Mammary epithelial cell (primary cell): ENCODE measurements at regions of chr14 and their contacts with region 1.

Region 1: DNA sequence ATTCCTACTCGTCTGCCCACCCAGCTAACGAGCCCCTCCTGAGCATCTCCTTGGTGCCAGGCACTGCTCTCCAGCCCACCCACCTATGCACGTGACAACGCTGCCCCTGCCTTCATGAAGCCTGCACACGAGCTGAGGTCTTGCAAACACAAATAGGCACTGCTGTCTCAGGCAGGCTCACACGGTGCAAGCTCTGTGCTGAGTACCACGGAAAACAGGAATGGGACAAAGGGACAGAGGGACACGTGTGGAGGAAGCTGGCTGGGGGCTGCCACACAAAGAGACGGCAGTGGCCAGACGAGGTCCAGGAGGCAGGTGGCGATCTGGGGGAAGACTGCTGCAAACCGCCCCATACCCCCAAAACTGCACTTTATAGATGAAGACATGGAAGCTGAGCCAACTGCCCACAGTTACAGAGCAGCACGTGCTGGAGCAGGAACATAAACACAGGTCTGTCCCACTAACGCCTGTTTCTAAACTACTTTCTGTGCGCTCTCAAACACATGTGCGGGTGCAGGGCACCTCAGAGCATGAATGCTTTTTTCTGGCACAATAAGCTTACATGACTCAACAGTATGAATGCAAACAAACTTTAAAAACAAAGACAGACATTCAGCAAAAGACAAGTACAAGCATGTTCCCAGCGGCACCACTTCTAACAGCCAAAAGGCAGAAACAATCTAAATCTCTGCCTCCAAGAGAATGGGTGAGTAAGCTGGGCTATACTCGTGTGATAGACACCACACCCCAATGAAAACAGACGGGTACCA is 64.5 kb downstream of the AMN start:
- DNase-seq: peak; percentile 99
- H3K4me3 ChIP-seq: no peak overlapping the region
- H3K27ac ChIP-seq: peak overlapping the region; percentile 67
- H3K4me1 ChIP-seq: peaks cover 20% of the 10 kb centered on the region
- H3K27me3 ChIP-seq: no peaks in the 10 kb centered on the region
- CTCF ChIP-seq: no peak

Region 2: DNA sequence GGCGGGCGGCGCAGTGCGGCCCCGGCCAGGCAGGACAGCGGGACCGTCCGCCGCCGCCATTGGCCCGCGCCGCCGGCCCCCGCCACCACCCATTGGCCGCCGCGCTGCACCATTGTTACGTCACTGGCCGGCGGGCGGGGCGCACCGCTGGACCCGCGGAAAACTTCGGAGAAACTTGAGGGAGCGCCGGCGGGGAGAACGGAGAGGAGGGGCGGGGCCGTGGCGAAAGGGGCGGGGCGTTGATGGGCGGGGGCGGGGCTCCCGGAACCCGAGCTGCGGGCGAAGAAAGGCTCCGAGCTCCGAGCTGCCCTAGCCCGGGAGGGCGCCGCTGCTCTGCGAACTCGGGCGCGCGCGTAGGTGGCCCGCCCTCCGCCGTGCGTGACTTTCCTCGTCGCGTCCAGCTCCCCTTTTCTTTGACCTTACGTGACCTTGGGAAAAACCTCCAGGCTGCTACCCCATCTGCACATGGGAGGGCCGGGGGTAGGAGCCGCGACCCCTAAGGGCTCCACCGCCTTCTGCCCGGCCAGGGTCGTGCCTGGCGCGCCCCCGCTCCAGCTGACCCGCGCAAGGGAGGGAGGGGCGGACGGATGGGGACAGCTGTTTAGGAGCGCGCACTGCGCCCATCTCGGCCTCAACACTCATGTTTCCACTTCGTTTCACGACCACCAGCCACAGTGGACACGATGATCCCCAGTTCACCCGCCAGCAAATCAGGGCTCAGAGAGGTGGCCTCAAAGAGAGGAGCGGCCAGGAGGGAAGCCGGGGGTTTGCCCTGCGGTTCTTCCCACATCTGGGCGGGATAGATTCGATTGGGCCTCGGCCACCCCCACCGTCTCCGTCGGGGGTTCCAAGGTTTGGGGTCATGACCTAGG is 477.0 kb before region 1 on chr14 and contains the start of gene ANKRD9:
- CTCF ChIA-PET with region 1: no interaction called
- dilution Hi-C with region 1: no loop called
- in situ Hi-C with region 1: no loop called
- intact Hi-C with region 1: no loop called
- DNase-seq: peak; percentile 93
- H3K4me3 ChIP-seq: peak within 1 kb of the TSS; percentile 52 to 70 (median 67)
- H3K27ac ChIP-seq: peak within 1 kb of the TSS; percentile 41
- H3K4me1 ChIP-seq: peaks cover 12% of the 10 kb centered on the region
- H3K27me3 ChIP-seq: no peaks in the 10 kb centered on the region
- CTCF ChIP-seq: no peak
- total RNA-seq, gene ANKRD9: 11.8 to 24.0 TPM

Region 3: DNA sequence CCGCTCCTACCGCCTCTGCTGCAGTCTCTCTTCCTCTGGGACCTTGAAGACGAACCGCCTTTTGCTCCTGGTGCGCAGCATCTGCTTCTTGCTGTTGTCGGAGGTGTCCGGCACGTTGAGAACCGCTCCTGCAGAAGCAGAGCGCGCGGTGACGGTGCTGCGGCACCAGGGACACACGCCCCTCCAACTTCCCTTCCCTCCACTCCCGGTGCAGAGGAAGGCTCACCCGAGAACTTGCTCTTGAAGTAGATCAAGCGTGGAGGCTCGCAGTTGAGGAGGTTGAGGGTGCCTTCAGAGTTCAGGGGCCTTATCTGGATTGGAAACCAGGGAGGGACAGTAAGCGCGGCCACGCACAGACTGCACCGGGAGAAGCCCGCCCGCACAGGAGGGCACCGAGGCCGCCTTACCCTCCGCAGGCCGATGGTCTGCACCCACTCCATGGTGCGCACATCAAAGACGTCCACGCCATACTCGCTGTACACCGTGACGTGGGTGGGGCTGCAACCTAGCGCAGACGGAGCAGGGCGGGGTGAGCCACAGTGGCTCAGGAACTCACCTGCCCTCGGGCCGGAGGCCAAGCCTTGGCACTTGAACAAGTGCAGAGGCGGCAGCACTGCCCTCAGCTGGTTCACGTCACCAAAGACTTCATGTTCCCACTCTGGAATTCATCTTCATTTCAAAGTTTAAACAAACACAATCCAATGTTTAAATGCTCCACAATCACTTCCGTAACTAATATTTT is 47.0 kb before region 1 on chr14:
- CTCF ChIA-PET with region 1: no interaction called
- dilution Hi-C with region 1: loop called (anchors 5 kb)
- in situ Hi-C with region 1: no loop called
- intact Hi-C with region 1: no loop called
- DNase-seq: no peak
- H3K4me3 ChIP-seq: no peak overlapping the region
- H3K27ac ChIP-seq: no peak overlapping the region
- H3K4me1 ChIP-seq: peaks cover 14% of the 10 kb centered on the region
- H3K27me3 ChIP-seq: no peaks in the 10 kb centered on the region
- CTCF ChIP-seq: no peak

Region 4: GRCh38 chr14:103031956-103032355 is 45.0 kb after region 1 on chr14:
- CTCF ChIA-PET with region 1: no interaction called
- dilution Hi-C with region 1: no loop called
- in situ Hi-C with region 1: no loop called
- intact Hi-C with region 1: no loop called
- DNase-seq: no peak
- H3K4me3 ChIP-seq: no peak overlapping the region
- H3K27ac ChIP-seq: no peak overlapping the region
- H3K4me1 ChIP-seq: peaks cover 3% of the 10 kb centered on the region
- H3K27me3 ChIP-seq: no peaks in the 10 kb centered on the region
- CTCF ChIP-seq: peak; percentile 23 to 44

Region 5: GRCh38 chr14:103057365-103058096 is 70.5 kb after region 1 on chr14 and contains the start of gene CDC42BPB:
- CTCF ChIA-PET with region 1: no interaction called
- dilution Hi-C with region 1: no loop called
- in situ Hi-C with region 1: no loop called
- intact Hi-C with region 1: loop called (anchors 5 kb)
- DNase-seq: peak; percentile 90
- H3K4me3 ChIP-seq: peak within 1 kb of the TSS; percentile 97 to 99 (median 99)
- H3K27ac ChIP-seq: peak within 1 kb of the TSS; percentile 54
- H3K4me1 ChIP-seq: peaks cover 17% of the 10 kb centered on the region
- H3K27me3 ChIP-seq: no peaks in the 10 kb centered on the region
- CTCF ChIP-seq: no peak
- total RNA-seq, gene CDC42BPB: 73.5 to 82.5 TPM